Mammary epithelial cell (primary cell): ENCODE measurements at regions of chrX and their contacts with region 1.

Region 1: GRCh38 chrX:72297953-72298730 is 7.6 kb downstream of the CITED1 start:
- DNase-seq: peak; percentile 27
- H3K4me3 ChIP-seq: no peak overlapping the region
- H3K27ac ChIP-seq: no peak overlapping the region
- H3K4me1 ChIP-seq: no peaks in the 10 kb centered on the region
- H3K27me3 ChIP-seq: peaks cover 31% of the 10 kb centered on the region
- CTCF ChIP-seq: peak; percentile 36 to 47

Region 2: DNA sequence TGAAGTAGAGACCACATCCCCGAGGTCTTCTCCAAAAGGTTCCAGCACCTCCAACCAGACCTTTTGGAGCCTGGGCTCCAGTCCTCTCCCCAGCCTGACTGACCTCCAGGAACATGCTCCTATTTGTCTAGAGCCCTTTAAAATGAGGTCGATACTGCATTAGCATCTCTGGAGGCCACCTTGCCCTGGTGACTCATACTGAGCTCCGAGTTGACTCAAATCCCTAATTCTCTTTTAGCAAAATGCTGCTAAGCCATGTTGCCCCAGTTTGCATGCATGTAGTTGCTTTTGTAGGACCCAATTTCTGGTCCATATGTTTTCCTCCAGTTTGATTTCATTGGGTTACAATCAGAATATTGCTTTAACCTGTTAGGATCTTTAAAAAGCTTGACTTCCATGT is 51.0 kb after region 1 on chrX:
- CTCF ChIA-PET with region 1: no interaction called
- dilution Hi-C with region 1: loop called (anchors 10 kb)
- in situ Hi-C with region 1: no loop called
- intact Hi-C with region 1: no loop called
- DNase-seq: no peak
- H3K4me3 ChIP-seq: no peak overlapping the region
- H3K27ac ChIP-seq: no peak overlapping the region
- H3K4me1 ChIP-seq: no peaks in the 10 kb centered on the region
- H3K27me3 ChIP-seq: peaks cover 2% of the 10 kb centered on the region
- CTCF ChIP-seq: no peak

Region 3: DNA sequence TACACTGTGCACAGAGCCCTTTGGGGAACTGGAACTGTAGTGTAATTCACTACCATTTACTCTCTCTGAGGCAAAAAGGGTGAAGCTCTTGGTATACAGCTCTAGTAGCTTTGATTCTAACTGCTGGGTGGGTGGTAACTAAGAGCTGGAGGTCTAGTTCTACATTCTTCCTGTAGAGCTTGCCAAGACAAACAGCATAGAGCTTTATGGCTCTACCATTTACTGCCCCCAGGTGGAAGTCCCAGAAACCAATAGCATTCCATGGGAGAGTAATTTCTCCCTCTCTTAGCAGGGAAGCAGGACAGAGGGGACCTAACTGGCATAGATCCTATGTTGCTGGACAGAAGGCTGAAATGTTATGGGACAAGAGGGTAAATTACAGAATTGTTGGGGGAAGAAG is 247.8 kb after region 1 on chrX:
- CTCF ChIA-PET with region 1: no interaction called
- dilution Hi-C with region 1: no loop called
- in situ Hi-C with region 1: no loop called
- intact Hi-C with region 1: loop called (anchors 5 kb)
- DNase-seq: no peak
- H3K4me3 ChIP-seq: no peak overlapping the region
- H3K27ac ChIP-seq: no peak overlapping the region
- H3K4me1 ChIP-seq: no peaks in the 10 kb centered on the region
- H3K27me3 ChIP-seq: no peaks in the 10 kb centered on the region
- CTCF ChIP-seq: no peak